Vagina (tissue), 2 donors: ENCODE measurements at regions of chr1 and their contacts with region 1.

Region 1: GRCh38 chr1:84344286-84344685 is 42.8 kb downstream of the SAMD13 start:
- DNase-seq: no peak
- H3K4me3 ChIP-seq: no peak overlapping the region
- H3K27ac ChIP-seq: no peak overlapping the region
- H3K4me1 ChIP-seq: no peaks in the 10 kb centered on the region
- H3K27me3 ChIP-seq: no peaks in the 10 kb centered on the region
- CTCF ChIP-seq: no peak
- POLR2A ChIP-seq: no peak

Region 2: DNA sequence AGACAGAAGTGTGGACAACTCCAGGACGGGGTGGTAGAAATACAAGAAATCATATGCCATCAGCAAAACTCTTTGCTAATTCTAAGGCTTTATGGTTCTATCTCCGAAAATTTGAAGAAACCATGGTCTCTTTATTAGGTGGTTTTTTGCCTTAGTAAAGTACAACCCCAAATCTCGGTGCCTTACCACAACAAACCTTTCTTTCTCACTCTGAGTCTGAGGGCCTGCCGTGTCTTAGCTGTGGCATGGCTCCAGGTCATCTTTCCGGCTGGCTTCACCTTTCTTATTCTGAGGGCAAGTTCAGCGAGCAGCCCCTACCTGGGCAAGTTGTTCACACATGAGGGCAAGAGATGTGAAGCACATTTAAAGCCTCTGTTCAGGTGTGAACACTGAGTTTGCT is 625.9 kb before region 1 on chr1:
- intact Hi-C with region 1: no loop called
- DNase-seq: no peak
- H3K4me3 ChIP-seq: no peak overlapping the region
- H3K27ac ChIP-seq: no peak overlapping the region
- H3K4me1 ChIP-seq: no peaks in the 10 kb centered on the region
- H3K27me3 ChIP-seq: no peaks in the 10 kb centered on the region
- CTCF ChIP-seq: no peak
- POLR2A ChIP-seq: no peak

Region 3: DNA sequence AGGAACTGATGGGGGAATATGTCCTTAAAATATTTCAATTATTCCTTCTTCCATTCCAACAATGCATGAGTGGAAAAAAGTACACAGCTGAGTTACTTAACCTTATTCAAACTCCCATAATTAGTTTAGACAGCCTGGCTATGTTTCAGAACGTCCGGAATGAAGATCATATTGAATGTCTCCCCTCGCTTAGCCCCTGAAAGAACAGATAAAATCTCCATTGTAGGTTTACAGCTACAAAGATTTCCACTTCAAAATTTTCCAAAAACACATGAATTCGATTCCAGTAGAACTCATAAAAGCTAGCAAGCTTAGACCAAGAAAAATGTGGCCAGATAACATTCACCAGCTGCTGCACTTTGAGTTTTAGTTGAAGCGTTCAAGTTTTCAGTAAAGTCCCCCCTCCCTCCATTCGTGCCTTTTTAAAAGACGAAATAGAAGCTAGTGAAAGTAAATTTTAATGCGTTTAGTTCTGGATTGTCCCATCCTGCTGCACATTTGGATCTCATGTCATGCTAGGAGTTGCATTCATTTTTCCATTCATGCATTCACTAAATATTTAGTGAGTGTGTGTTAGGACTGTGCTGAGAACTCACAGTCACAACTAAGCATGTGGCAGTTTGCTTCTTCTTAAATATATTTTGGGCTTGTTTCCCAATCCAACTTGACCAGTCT is 375.4 kb after region 1 on chr1:
- intact Hi-C with region 1: loop called (anchors 10 kb)
- DNase-seq: no peak
- H3K4me3 ChIP-seq: no peak overlapping the region
- H3K27ac ChIP-seq: peak overlapping the region; percentile 19
- H3K4me1 ChIP-seq: peaks cover 4% of the 10 kb centered on the region
- H3K27me3 ChIP-seq: no peaks in the 10 kb centered on the region
- CTCF ChIP-seq: no peak
- POLR2A ChIP-seq: no peak